Caco-2 (cell line): ENCODE measurements at regions of chr6 and their contacts with region 1.

Region 1: GRCh38 chr6:1346558-1347091 is 34.7 kb downstream of the FOXQ1 start:
- DNase-seq: no peak
- H3K4me3 ChIP-seq: no peak overlapping the region
- H3K4me3 Mint-ChIP-seq: no peak overlapping the region
- H3K27ac Mint-ChIP-seq: no peak overlapping the region
- H3K4me1 ChIP-seq: no peaks in the 10 kb centered on the region
- H3K4me1 Mint-ChIP-seq: no peaks in the 10 kb centered on the region
- H3K27me3 ChIP-seq: no peaks in the 10 kb centered on the region
- H3K27me3 Mint-ChIP-seq: no peaks in the 10 kb centered on the region
- CTCF ChIP-seq: no peak

Region 2: GRCh38 chr6:1062786-1063545 is 283.7 kb before region 1 on chr6:
- CTCF ChIA-PET with region 1: no interaction called
- POLR2A ChIA-PET with region 1: interaction called, 13 read pairs
- intact Hi-C with region 1: no loop called
- DNase-seq: no peak
- H3K4me3 ChIP-seq: no peak overlapping the region
- H3K4me3 Mint-ChIP-seq: no peak overlapping the region
- H3K27ac Mint-ChIP-seq: no peak overlapping the region
- H3K4me1 ChIP-seq: peaks cover 31% of the 10 kb centered on the region
- H3K4me1 Mint-ChIP-seq: peaks cover 33% of the 10 kb centered on the region
- H3K27me3 ChIP-seq: no peaks in the 10 kb centered on the region
- H3K27me3 Mint-ChIP-seq: no peaks in the 10 kb centered on the region
- CTCF ChIP-seq: peak in 1 of 2 experiments; percentile 16

Region 3: GRCh38 chr6:1267057-1267732 is 79.4 kb before region 1 on chr6:
- CTCF ChIA-PET with region 1: no interaction called
- POLR2A ChIA-PET with region 1: no interaction called
- intact Hi-C with region 1: no loop called
- DNase-seq: peak; percentile 44 to 49
- H3K4me3 ChIP-seq: no peak overlapping the region
- H3K4me3 Mint-ChIP-seq: no peak overlapping the region
- H3K27ac Mint-ChIP-seq: peak overlapping the region; percentile 91
- H3K4me1 ChIP-seq: peaks cover 74% of the 10 kb centered on the region
- H3K4me1 Mint-ChIP-seq: peaks cover 49% of the 10 kb centered on the region
- H3K27me3 ChIP-seq: no peaks in the 10 kb centered on the region
- H3K27me3 Mint-ChIP-seq: no peaks in the 10 kb centered on the region
- CTCF ChIP-seq: no peak

Region 4: GRCh38 chr6:1335367-1336037 is 11.1 kb before region 1 on chr6:
- CTCF ChIA-PET with region 1: no interaction called
- POLR2A ChIA-PET with region 1: no interaction called
- intact Hi-C with region 1: no loop called
- DNase-seq: peak; percentile 90 to 94
- H3K4me3 ChIP-seq: no peak overlapping the region
- H3K4me3 Mint-ChIP-seq: peak overlapping the region; percentile 53
- H3K27ac Mint-ChIP-seq: peak overlapping the region; percentile 74
- H3K4me1 ChIP-seq: peaks cover 26% of the 10 kb centered on the region
- H3K4me1 Mint-ChIP-seq: peaks cover 24% of the 10 kb centered on the region
- H3K27me3 ChIP-seq: no peaks in the 10 kb centered on the region
- H3K27me3 Mint-ChIP-seq: no peaks in the 10 kb centered on the region
- CTCF ChIP-seq: no peak